ENCODE measurements at regions of chr22 and their contacts with region 1.

Region 1: GRCh38 chr22:26483439-26484359 is at the starts of genes HPS4 and SRRD:
- DNase-seq: peak; percentile 96 to 97
- ATAC-seq: peak; percentile 83 to 92 (median 85)
- H3K4me3 ChIP-seq: peak within 1 kb of the TSS; percentile 91
- H3K4me3 Mint-ChIP-seq: peak within 1 kb of the TSS; percentile 95
- H3K27ac ChIP-seq: peak within 1 kb of the TSS; percentile 84
- H3K27ac Mint-ChIP-seq: peak within 1 kb of the TSS; percentile 95 to 98
- H3K4me1 ChIP-seq: peaks cover 19% of the 10 kb centered on the region
- H3K4me1 Mint-ChIP-seq: peaks cover 64 to 66% of the 10 kb centered on the region in 2 donors
- H3K27me3 ChIP-seq: no peaks in the 10 kb centered on the region
- H3K27me3 Mint-ChIP-seq: no peaks in the 10 kb centered on the region
- CTCF ChIP-seq: no peak
- total RNA-seq, gene HPS4: 44.8 to 53.6 (median 50.7) TPM
- total RNA-seq, gene SRRD: 18.8 to 21.5 (median 21.4) TPM

Region 2: GRCh38 chr22:26502688-26503561 is 19.2 kb after region 1 on chr22:
- intact Hi-C with region 1: loop called (anchors 2 kb)
- DNase-seq: peak; percentile 57 to 84
- ATAC-seq: peak; percentile 88 to 91 (median 89)
- H3K4me3 ChIP-seq: no peak overlapping the region
- H3K4me3 Mint-ChIP-seq: peak overlapping the region; percentile 79
- H3K27ac ChIP-seq: peak overlapping the region; percentile 63
- H3K27ac Mint-ChIP-seq: peak overlapping the region; percentile 87 to 93
- H3K4me1 ChIP-seq: peaks cover 19% of the 10 kb centered on the region
- H3K4me1 Mint-ChIP-seq: peaks cover 26% of the 10 kb centered on the region in 2 donors
- H3K27me3 ChIP-seq: no peaks in the 10 kb centered on the region
- H3K27me3 Mint-ChIP-seq: no peaks in the 10 kb centered on the region
- CTCF ChIP-seq: peak; percentile 63

Region 3: GRCh38 chr22:26511857-26512793 is 28.4 kb after region 1 on chr22 and contains the start of gene TFIP11:
- intact Hi-C with region 1: loop called (anchors 1 kb)
- DNase-seq: peak; percentile 91 to 93
- ATAC-seq: peak; percentile 92 to 99 (median 96)
- H3K4me3 ChIP-seq: peak within 1 kb of the TSS; percentile 72
- H3K4me3 Mint-ChIP-seq: peak within 1 kb of the TSS; percentile 99
- H3K27ac ChIP-seq: peak within 1 kb of the TSS; percentile 69
- H3K27ac Mint-ChIP-seq: peak within 1 kb of the TSS; percentile 98 to 99
- H3K4me1 ChIP-seq: peaks cover 18% of the 10 kb centered on the region
- H3K4me1 Mint-ChIP-seq: peaks cover 24 to 32% of the 10 kb centered on the region in 2 donors
- H3K27me3 ChIP-seq: no peaks in the 10 kb centered on the region
- H3K27me3 Mint-ChIP-seq: no peaks in the 10 kb centered on the region
- CTCF ChIP-seq: no peak
- total RNA-seq, gene TFIP11: 108 to 131 (median 124) TPM

Region 4: GRCh38 chr22:26672590-26673468 is 189.1 kb after region 1 on chr22:
- intact Hi-C with region 1: loop called (anchors 2 kb)
- DNase-seq: peak; percentile 87 to 97
- ATAC-seq: peak; percentile 60 to 87 (median 77)
- H3K4me3 ChIP-seq: peak overlapping the region; percentile 65
- H3K4me3 Mint-ChIP-seq: peak overlapping the region; percentile 96
- H3K27ac ChIP-seq: peak overlapping the region; percentile 91
- H3K27ac Mint-ChIP-seq: peak overlapping the region; percentile 95 to 99
- H3K4me1 ChIP-seq: peaks cover 86% of the 10 kb centered on the region
- H3K4me1 Mint-ChIP-seq: peaks cover 80 to 88% of the 10 kb centered on the region in 2 donors
- H3K27me3 ChIP-seq: no peaks in the 10 kb centered on the region
- H3K27me3 Mint-ChIP-seq: no peaks in the 10 kb centered on the region
- CTCF ChIP-seq: no peak